IMR-90 (cell line): ENCODE measurements at regions of chr5 and their contacts with region 1.

Region 1: DNA sequence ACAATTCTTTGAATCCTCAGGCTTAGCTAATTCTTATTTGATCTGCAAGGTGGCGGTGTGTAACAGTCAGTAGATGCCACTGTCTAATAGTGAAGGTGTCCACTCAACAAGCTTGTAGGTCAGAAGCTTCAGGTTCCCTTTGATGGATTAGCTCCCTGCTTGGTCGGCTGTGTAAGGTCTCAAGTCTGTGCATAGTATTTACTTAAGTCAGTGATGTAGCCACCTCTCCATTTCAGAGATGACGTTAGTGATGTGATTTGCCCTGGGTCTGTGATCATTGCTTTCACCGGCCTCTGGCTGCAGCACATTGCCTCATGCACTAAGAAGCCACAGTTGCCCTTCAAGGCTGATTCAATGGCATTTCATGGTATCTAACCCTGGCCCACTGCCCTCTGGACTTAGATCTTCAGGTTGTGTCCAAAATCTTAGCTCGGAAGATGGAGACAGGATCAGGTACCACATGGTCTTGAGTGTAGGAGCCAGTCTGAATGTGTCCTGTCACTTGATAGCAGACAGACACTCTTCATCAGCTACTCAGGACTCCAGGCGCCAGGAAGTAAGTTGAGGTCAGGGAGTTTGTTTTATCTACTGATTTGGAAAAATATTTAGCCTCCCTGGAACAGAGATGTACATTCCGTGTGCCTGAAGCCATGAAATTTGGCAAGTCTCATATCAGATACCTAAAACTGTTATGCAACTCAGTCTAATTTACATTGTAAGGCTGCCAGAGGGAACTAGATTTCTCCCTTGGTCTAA is 42.9 kb downstream of the SUB1 start:
- DNase-seq: peak; percentile 85
- ATAC-seq: peak; percentile 68
- H3K4me3 ChIP-seq: no peak overlapping the region
- H3K27ac ChIP-seq: peak overlapping the region; percentile 56; the same call in 1 of the 2 replicates
- H3K4me1 ChIP-seq: peaks cover 20% of the 10 kb centered on the region
- H3K27me3 ChIP-seq: no peaks in the 10 kb centered on the region
- CTCF ChIP-seq: no peak
- POLR2A ChIP-seq: no peak
- RAD21 ChIP-seq: 0 out of 2 replicates have a peak, but pooled peaks have one; percentile 1

Region 2: GRCh38 chr5:32383065-32383464 is 245.2 kb before region 1 on chr5:
- CTCF ChIA-PET with region 1: no interaction called
- POLR2A ChIA-PET with region 1: no interaction called
- dilution Hi-C with region 1: no loop called
- in situ Hi-C with region 1: no loop called
- intact Hi-C with region 1: no loop called
- DNase-seq: no peak
- ATAC-seq: no peak
- H3K4me3 ChIP-seq: no peak overlapping the region
- H3K27ac ChIP-seq: no peak overlapping the region
- H3K4me1 ChIP-seq: no peaks in the 10 kb centered on the region
- H3K27me3 ChIP-seq: no peaks in the 10 kb centered on the region
- CTCF ChIP-seq: no peak
- POLR2A ChIP-seq: no peak
- RAD21 ChIP-seq: no peak

Region 3: GRCh38 chr5:32444431-32445286 is 183.6 kb before region 1 on chr5 and contains the start of gene ZFR:
- CTCF ChIA-PET with region 1: no interaction called
- POLR2A ChIA-PET with region 1: no interaction called
- dilution Hi-C with region 1: no loop called
- in situ Hi-C with region 1: no loop called
- intact Hi-C with region 1: no loop called
- DNase-seq: peak; percentile 85
- ATAC-seq: peak; percentile 91
- H3K4me3 ChIP-seq: peak within 1 kb of the TSS; percentile 83
- H3K27ac ChIP-seq: peak within 1 kb of the TSS; percentile 94
- H3K4me1 ChIP-seq: peaks cover 2% of the 10 kb centered on the region
- H3K27me3 ChIP-seq: no peaks in the 10 kb centered on the region
- CTCF ChIP-seq: no peak
- POLR2A ChIP-seq: peak; percentile 74
- RAD21 ChIP-seq: no peak
- total RNA-seq, gene ZFR: 81.4 and 88.0 TPM in 2 replicates

Region 4: DNA sequence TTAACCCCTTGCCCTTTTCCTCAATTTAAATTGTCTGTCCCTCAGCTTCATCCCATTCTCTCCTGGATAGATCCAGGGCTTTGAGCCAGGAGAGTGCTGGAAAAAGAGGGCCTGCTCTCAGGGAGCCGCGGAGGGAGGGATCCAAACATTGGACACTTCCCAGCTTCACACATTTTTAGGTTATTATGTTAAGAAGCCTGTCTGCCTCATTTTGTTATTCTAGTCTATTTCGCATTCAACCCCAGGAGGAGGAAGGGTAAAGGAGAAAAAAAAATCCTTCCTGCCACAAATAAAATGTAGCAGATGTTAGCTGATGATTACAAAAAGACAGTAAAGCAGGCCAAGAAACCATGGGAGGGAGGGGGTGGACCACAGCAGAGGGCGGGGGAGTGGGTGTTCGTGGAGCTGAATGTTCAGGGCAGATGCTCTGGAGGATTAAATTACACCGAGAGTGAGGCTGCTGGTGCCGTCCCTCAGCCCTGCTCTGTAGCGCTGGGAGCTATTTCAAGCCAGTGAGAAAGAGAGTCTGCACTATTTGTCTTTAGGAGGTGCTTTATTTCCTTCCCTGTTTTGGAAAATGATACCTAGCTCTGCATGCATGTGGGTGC is 123.1 kb before region 1 on chr5:
- CTCF ChIA-PET with region 1: no interaction called
- POLR2A ChIA-PET with region 1: no interaction called
- dilution Hi-C with region 1: no loop called
- in situ Hi-C with region 1: no loop called
- intact Hi-C with region 1: no loop called
- DNase-seq: peak; percentile 94
- ATAC-seq: peak; percentile 87
- H3K4me3 ChIP-seq: no peak overlapping the region
- H3K27ac ChIP-seq: peak overlapping the region; percentile 80; the same call in 1 of the 2 replicates
- H3K4me1 ChIP-seq: peaks cover 30% of the 10 kb centered on the region
- H3K27me3 ChIP-seq: 0 out of 2 replicates have a peak, but pooled peaks cover 4% of the 10 kb centered on the region
- CTCF ChIP-seq: no peak
- POLR2A ChIP-seq: no peak
- RAD21 ChIP-seq: no peak

Region 5: GRCh38 chr5:33400675-33401074 is 772.4 kb after region 1 on chr5:
- CTCF ChIA-PET with region 1: no interaction called
- POLR2A ChIA-PET with region 1: interaction called, 17 read pairs
- dilution Hi-C with region 1: no loop called
- in situ Hi-C with region 1: no loop called
- intact Hi-C with region 1: no loop called
- DNase-seq: no peak
- ATAC-seq: no peak
- H3K4me3 ChIP-seq: no peak overlapping the region
- H3K27ac ChIP-seq: no peak overlapping the region
- H3K4me1 ChIP-seq: peaks cover 4% of the 10 kb centered on the region; the same call in 1 of the 2 replicates
- H3K27me3 ChIP-seq: no peaks in the 10 kb centered on the region
- CTCF ChIP-seq: no peak
- POLR2A ChIP-seq: no peak
- RAD21 ChIP-seq: no peak